A549 (cell line): ENCODE measurements at regions of chr19 and their contacts with region 1.

Region 1: GRCh38 chr19:35352448-35353304 is 5.0 kb downstream of the FFAR1 start:
- DNase-seq: peak; percentile 87 to 98
- ATAC-seq: peak; percentile 77 to 88
- H3K4me3 ChIP-seq: no peak overlapping the region
- H3K27ac ChIP-seq: no peak overlapping the region
- H3K4me1 ChIP-seq: no peaks in the 10 kb centered on the region
- CTCF ChIP-seq: peak; percentile 98
- EP300 ChIP-seq: no peak
- POLR2A ChIP-seq: no peak
- RAD21 ChIP-seq: peak; percentile 98 to 99

Region 2: GRCh38 chr19:35330475-35330874 is 22.2 kb before region 1 on chr19:
- CTCF ChIA-PET with region 1: interaction called, 24 read pairs
- POLR2A ChIA-PET with region 1: no interaction called
- DNase-seq: no peak
- ATAC-seq: no peak
- H3K4me3 ChIP-seq: no peak overlapping the region
- H3K27ac ChIP-seq: no peak overlapping the region
- H3K4me1 ChIP-seq: no peaks in the 10 kb centered on the region
- CTCF ChIP-seq: no peak
- EP300 ChIP-seq: no peak
- POLR2A ChIP-seq: no peak
- RAD21 ChIP-seq: no peak

Region 3: GRCh38 chr19:35389192-35389861 is 36.7 kb after region 1 on chr19:
- CTCF ChIA-PET with region 1: interaction called, 29 read pairs
- POLR2A ChIA-PET with region 1: no interaction called
- DNase-seq: no peak
- ATAC-seq: no peak
- H3K4me3 ChIP-seq: no peak overlapping the region
- H3K27ac ChIP-seq: no peak overlapping the region
- H3K4me1 ChIP-seq: no peaks in the 10 kb centered on the region
- CTCF ChIP-seq: no peak
- EP300 ChIP-seq: no peak
- POLR2A ChIP-seq: no peak
- RAD21 ChIP-seq: no peak

Region 4: GRCh38 chr19:35449053-35449687 is 96.5 kb after region 1 on chr19:
- CTCF ChIA-PET with region 1: interaction called, 25 read pairs
- POLR2A ChIA-PET with region 1: no interaction called
- DNase-seq: no peak
- ATAC-seq: peak; percentile 10 to 41; a peak in 3 of 6 replicates
- H3K4me3 ChIP-seq: no peak overlapping the region
- H3K27ac ChIP-seq: no peak overlapping the region
- H3K4me1 ChIP-seq: no peaks in the 10 kb centered on the region
- CTCF ChIP-seq: no peak
- EP300 ChIP-seq: no peak
- POLR2A ChIP-seq: no peak
- RAD21 ChIP-seq: no peak

Region 5: GRCh38 chr19:35484252-35485036 is 131.8 kb after region 1 on chr19:
- CTCF ChIA-PET with region 1: interaction called, 256 read pairs
- POLR2A ChIA-PET with region 1: no interaction called
- DNase-seq: no peak
- ATAC-seq: no peak
- H3K4me3 ChIP-seq: no peak overlapping the region
- H3K27ac ChIP-seq: no peak overlapping the region
- H3K4me1 ChIP-seq: no peaks in the 10 kb centered on the region
- CTCF ChIP-seq: no peak
- EP300 ChIP-seq: no peak
- POLR2A ChIP-seq: no peak
- RAD21 ChIP-seq: no peak